ENCODE measurements at regions of chr4 and their contacts with region 1.

Region 1: GRCh38 chr4:7192252-7193029 is at the start of gene SORCS2:
- DNase-seq: no peak
- H3K4me3 ChIP-seq: peak within 1 kb of the TSS; percentile 60 to 66 (median 62)
- H3K27ac ChIP-seq: peak within 1 kb of the TSS; percentile 19 to 48 (median 31)
- H3K4me1 ChIP-seq: peaks cover 15 to 60% (median 53%) of the 10 kb centered on the region in 4 donors
- H3K27me3 ChIP-seq: peaks cover 0 to 35% (median 2%) of the 10 kb centered on the region in 4 donors
- CTCF ChIP-seq: peak; percentile 81 to 89 (median 87)
- EP300 ChIP-seq: no peak
- POLR2A ChIP-seq: no peak
- total RNA-seq, gene SORCS2: 3.3 to 10.1 (median 4.3) TPM

Region 2: DNA sequence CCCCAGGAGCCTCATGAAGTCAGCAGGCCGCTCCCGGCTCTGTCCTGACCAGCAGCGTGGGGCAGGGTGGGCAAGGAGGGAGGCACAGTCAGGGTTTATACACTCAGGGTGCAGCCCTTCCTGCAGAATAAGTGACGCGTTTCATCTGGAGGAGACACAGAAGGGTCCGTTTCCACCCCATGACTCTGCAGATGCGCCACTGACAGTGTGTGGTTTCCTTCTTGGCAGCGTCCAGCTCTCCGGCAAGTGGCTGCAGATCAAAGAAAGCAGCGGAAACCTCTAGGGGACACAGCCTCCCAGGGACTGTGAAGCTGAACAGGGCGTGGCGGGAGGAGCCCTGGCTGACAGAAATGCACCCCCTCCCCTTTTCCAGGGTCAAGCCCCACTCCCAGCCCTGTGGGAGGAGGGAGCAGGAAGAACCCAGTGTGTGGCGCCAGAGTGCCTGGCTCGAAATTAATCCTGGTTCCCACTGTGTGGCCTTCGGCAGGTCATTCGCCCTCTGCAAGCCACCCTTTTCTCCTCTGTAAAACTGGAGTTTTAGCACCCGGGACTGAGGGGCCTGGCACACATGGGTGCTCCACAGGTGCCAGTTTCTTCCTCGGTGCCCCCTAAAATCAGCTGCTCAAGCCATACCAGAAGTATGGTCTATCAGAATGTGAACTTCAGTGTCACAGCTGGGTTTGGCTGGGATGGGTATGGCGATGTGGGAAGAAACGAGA is 300.1 kb before region 1 on chr4:
- intact Hi-C with region 1: no loop called
- DNase-seq: no peak
- H3K4me3 ChIP-seq: peak overlapping the region in 3 of 4 donors; percentile 7 to 39 (median 10)
- H3K27ac ChIP-seq: peak overlapping the region in 3 of 4 donors; percentile 19 to 37 (median 34)
- H3K4me1 ChIP-seq: peaks cover 13 to 24% (median 19%) of the 10 kb centered on the region in 4 donors
- H3K27me3 ChIP-seq: no peaks in the 10 kb centered on the region
- CTCF ChIP-seq: no peak
- EP300 ChIP-seq: no peak
- POLR2A ChIP-seq: peak; percentile 28

Region 3: DNA sequence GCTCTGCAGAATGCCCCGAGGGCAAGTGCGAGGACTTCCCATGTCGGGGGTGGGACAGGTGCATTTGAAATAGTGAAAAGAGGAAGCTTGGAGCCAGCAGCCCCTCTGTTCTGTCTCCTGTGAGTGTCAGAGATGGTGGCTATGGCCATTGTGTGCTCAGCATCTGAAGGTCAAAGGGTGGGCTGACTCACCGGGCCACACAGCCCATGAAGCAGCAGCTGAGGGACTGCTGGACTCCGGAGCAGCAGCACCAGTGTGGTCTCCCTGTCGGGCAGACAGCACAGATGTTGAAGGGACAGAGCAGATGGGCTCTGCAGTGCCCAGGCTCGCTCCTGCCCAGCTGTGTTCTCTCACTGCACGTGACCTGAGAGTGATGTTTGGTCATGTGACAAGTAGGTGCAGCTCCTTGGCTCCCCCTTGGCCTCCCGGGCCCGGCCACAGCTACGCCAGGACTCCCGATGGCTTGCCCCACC is 229.3 kb before region 1 on chr4:
- intact Hi-C with region 1: no loop called
- DNase-seq: peak; percentile 84
- H3K4me3 ChIP-seq: no peak overlapping the region
- H3K27ac ChIP-seq: no peak overlapping the region
- H3K4me1 ChIP-seq: peaks cover 0 to 26% (median 11%) of the 10 kb centered on the region in 4 donors
- H3K27me3 ChIP-seq: no peaks in the 10 kb centered on the region
- CTCF ChIP-seq: no peak
- EP300 ChIP-seq: no peak
- POLR2A ChIP-seq: no peak

Region 4: GRCh38 chr4:7295911-7296660 is 103.6 kb after region 1 on chr4:
- intact Hi-C with region 1: loop called (anchors 1 kb)
- DNase-seq: no peak
- H3K4me3 ChIP-seq: no peak overlapping the region
- H3K27ac ChIP-seq: peak overlapping the region in 2 of 4 donors; percentile 41 to 62
- H3K4me1 ChIP-seq: peaks cover 10 to 29% (median 24%) of the 10 kb centered on the region in 4 donors
- H3K27me3 ChIP-seq: no peaks in the 10 kb centered on the region
- CTCF ChIP-seq: peak; percentile 67 to 73 (median 67)
- EP300 ChIP-seq: no peak
- POLR2A ChIP-seq: no peak

Region 5: DNA sequence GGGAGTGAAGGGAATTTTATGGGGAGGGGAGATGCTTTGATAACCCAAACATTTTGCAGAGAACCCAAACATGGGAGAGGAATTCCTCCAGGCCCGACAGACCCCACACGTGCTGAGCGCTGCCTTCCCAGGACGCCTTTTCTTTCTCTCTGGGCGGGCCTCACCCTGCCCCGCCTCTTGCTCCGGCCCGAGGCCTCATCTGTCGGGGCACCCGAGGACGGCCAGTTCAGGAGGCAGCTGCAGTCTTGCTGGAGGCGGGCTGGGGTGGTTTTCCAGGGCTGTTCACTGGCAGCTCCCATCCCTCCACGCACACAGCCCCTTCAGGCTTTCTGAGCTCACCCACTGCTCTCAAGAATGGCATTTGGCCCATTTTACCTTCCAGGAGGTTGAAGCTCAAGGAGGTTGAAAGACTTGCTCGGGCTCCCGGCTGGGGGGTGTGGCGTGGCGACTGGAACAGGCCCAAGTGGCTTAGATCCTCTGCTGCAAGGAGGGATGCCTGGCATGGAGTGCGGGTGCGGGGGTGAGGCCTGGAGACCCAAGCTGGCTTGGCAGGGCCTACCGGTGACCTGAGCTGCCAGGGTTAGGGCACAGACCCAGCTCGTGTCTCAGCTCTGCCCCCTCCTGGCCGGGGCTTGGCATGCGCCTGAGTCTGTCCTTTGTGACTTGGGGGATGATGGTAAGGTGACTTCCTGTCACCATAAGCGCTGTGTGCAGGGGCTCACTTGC is 143.1 kb after region 1 on chr4:
- intact Hi-C with region 1: loop called (anchors 5 kb)
- DNase-seq: no peak
- H3K4me3 ChIP-seq: no peak overlapping the region
- H3K27ac ChIP-seq: no peak overlapping the region
- H3K4me1 ChIP-seq: peaks cover 4 to 42% (median 25%) of the 10 kb centered on the region in 4 donors
- H3K27me3 ChIP-seq: no peaks in the 10 kb centered on the region
- CTCF ChIP-seq: peak; percentile 58 to 71 (median 63)
- EP300 ChIP-seq: no peak
- POLR2A ChIP-seq: no peak

Region 6: GRCh38 chr4:7462509-7462971 is 270.1 kb after region 1 on chr4:
- intact Hi-C with region 1: loop called (anchors 10 kb)
- DNase-seq: no peak
- H3K4me3 ChIP-seq: no peak overlapping the region
- H3K27ac ChIP-seq: peak overlapping the region in 2 of 4 donors; percentile 5 to 36
- H3K4me1 ChIP-seq: peaks cover 0 to 35% (median 29%) of the 10 kb centered on the region in 4 donors
- H3K27me3 ChIP-seq: no peaks in the 10 kb centered on the region
- CTCF ChIP-seq: peak; percentile 27 to 32 (median 29)
- EP300 ChIP-seq: no peak
- POLR2A ChIP-seq: no peak

Region 7: GRCh38 chr4:7719354-7720174 is 527.1 kb after region 1 on chr4:
- intact Hi-C with region 1: loop called (anchors 2 kb)
- DNase-seq: no peak
- H3K4me3 ChIP-seq: peak overlapping the region in 2 of 4 donors; percentile 28 to 38
- H3K27ac ChIP-seq: no peak overlapping the region
- H3K4me1 ChIP-seq: peaks cover 4 to 8% (median 7%) of the 10 kb centered on the region in 4 donors
- H3K27me3 ChIP-seq: peaks cover 0 to 6% (median 0%) of the 10 kb centered on the region in 4 donors
- CTCF ChIP-seq: peak; percentile 70 to 84 (median 80)
- EP300 ChIP-seq: no peak
- POLR2A ChIP-seq: no peak